Activated CD4-positive, alpha-beta T cell treated with anti-CD3 and anti-CD28 coated beads for 36 hours (primary cell): ENCODE measurements at regions of chr10 and their contacts with region 1.

Region 1: GRCh38 chr10:112375721-112376395 is 1.9 kb downstream of the ACSL5 start:
- DNase-seq: peak; percentile 51
- ATAC-seq: peak; percentile 64
- H3K4me3 Mint-ChIP-seq: peak overlapping the region; percentile 93
- H3K27ac Mint-ChIP-seq: peak overlapping the region; percentile 100
- H3K4me1 Mint-ChIP-seq: peaks cover 54% of the 10 kb centered on the region
- H3K27me3 Mint-ChIP-seq: no peaks in the 10 kb centered on the region

Region 2: GRCh38 chr10:112183329-112184051 is 192.4 kb before region 1 on chr10 and contains the start of gene GPAM:
- CTCF ChIA-PET with region 1: no interaction called
- POLR2A ChIA-PET with region 1: no interaction called
- intact Hi-C with region 1: loop called in 1 of 2 experiments (anchors 5 kb)
- DNase-seq: peak; percentile 98
- ATAC-seq: peak; percentile 97
- H3K4me3 Mint-ChIP-seq: peak within 1 kb of the TSS; percentile 88
- H3K27ac Mint-ChIP-seq: peak within 1 kb of the TSS; percentile 88
- H3K4me1 Mint-ChIP-seq: peaks cover 27% of the 10 kb centered on the region
- H3K27me3 Mint-ChIP-seq: peaks cover 2% of the 10 kb centered on the region
- total RNA-seq, gene GPAM: 5.7 to 7.5 TPM

Region 3: DNA sequence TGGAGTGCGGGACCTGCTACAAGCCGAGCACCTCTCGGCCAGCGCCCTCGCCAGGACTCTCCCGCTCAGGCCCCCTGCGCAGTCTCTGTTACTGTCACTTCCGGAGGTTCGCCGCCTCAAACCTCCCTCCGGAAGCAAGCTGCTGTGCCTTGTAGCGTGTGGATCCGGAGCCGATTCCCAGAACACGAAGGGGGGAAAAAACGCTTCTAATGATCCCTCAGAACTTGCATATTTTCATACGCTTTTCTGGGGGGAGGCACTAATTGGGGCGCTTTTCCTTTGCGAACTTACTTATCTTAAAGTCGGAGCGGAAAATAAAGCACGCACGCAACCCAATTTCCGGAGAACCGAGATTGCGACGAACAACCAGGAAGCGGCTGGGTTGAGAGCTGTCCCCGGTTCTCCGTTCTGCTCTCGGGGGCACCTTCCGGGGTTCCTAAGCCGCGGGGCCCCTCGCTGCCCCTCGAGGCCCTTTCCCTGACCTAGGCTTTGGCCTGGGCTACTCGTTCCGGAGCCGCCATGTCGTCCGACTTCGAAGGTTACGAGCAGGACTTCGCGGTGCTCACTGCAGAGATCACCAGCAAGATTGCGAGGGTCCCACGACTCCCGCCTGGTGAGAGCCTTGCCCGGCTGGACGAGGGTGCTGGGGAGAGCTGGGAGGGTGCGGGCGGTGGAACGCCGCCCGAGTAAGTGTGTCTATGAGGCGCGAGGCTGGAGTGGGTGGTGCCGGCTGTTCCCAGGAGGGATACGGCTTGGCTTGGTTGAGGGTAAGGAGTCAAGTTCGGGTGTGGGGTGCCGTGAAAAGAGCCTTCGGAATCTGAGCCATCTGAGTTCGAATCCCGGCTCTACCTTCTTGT is 71.2 kb after region 1 on chr10 and contains the starts of genes VTI1A and ZDHHC6:
- CTCF ChIA-PET with region 1: interaction called, 3 read pairs
- POLR2A ChIA-PET with region 1: interaction called, 4 read pairs
- intact Hi-C with region 1: loop called (anchors 2 to 5 kb)
- DNase-seq: peak; percentile 91
- ATAC-seq: peak; percentile 90
- H3K4me3 Mint-ChIP-seq: peak within 1 kb of the TSS; percentile 84
- H3K27ac Mint-ChIP-seq: peak within 1 kb of the TSS; percentile 96
- H3K4me1 Mint-ChIP-seq: peaks cover 52% of the 10 kb centered on the region
- H3K27me3 Mint-ChIP-seq: no peaks in the 10 kb centered on the region
- total RNA-seq, gene VTI1A: 27.1 to 33.4 TPM
- total RNA-seq, gene ZDHHC6: 42.1 to 61.3 TPM

Region 4: DNA sequence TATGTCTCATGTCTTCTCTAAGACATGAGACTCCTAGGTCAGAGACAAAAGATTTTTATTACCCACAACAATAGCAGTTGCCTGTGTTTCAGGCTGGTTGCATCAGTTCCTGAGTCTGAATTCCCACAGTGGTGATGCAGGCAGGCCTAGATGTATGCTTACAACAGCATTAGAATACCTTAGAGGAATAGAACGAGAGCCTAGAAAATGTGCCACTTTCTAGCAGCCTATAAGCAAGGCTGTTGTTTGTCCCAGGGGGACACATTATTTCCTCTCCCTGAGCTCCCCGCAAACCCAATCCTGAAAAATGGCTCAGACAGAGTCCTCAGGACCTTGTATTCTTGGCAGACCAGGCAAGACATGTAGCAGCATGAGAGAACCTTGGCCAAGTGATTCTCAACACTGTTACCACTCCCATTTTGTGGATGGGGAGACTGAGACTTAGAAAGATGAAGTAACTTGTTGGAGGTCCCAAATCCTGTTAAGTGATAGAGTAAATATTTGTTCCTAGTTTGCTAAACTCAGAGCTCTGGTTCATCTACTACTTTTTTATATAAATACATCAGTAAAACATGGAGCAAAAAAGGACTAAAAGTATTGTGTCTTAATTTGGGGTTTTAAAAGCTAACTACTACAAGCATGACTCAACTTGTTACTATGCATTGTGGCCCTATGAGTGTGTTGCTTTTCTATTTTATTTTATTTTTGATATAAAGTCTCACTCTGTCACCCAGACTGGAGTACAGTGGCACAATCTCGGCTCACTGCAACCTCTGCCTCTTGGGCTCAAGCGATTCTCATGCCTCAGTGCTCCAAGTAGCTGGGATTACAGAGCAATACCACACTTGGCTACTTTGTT is 85.4 kb after region 1 on chr10:
- CTCF ChIA-PET with region 1: no interaction called
- POLR2A ChIA-PET with region 1: interaction called, 4 read pairs
- intact Hi-C with region 1: loop called in 1 of 2 experiments (anchors 5 kb)
- DNase-seq: peak; percentile 80
- ATAC-seq: peak; percentile 89
- H3K4me3 Mint-ChIP-seq: no peak overlapping the region
- H3K27ac Mint-ChIP-seq: peak overlapping the region; percentile 95
- H3K4me1 Mint-ChIP-seq: peaks cover 33% of the 10 kb centered on the region
- H3K27me3 Mint-ChIP-seq: no peaks in the 10 kb centered on the region

Region 5: DNA sequence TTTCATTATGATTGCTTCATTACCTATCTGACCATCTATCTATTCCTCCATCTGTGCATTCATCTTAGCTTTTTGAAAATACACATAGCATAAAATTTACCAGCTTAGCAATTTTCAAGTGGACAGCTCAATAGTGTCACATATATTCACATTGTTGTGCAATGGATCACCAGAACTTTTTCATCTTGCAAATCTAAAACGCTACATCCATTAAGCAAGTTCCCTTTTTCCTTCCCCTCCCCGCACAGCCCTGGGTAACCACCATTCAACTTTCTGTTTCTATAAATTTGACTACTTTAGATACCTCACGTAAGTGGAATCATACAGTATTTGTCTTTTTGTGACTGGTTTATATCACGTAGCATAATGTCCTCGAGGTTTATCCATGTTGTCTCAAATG is 1589.8 kb after region 1 on chr10:
- CTCF ChIA-PET with region 1: no interaction called
- POLR2A ChIA-PET with region 1: no interaction called
- intact Hi-C with region 1: no loop called
- DNase-seq: no peak
- ATAC-seq: no peak
- H3K4me3 Mint-ChIP-seq: no peak overlapping the region
- H3K27ac Mint-ChIP-seq: no peak overlapping the region
- H3K4me1 Mint-ChIP-seq: peaks cover 22% of the 10 kb centered on the region
- H3K27me3 Mint-ChIP-seq: no peaks in the 10 kb centered on the region